Prostate gland (tissue), 2 donors: ENCODE measurements at regions of chr3 and their contacts with region 1.

Region 1: GRCh38 chr3:156674046-156674910 is at the start of gene TIPARP:
- DNase-seq: peak; percentile 99
- H3K4me3 ChIP-seq: peak within 1 kb of the TSS; percentile 88 to 94
- H3K27ac ChIP-seq: peak within 1 kb of the TSS; percentile 96 to 98
- H3K4me1 ChIP-seq: peaks cover 3% of the 10 kb centered on the region
- H3K27me3 ChIP-seq: no peaks in the 10 kb centered on the region
- CTCF ChIP-seq: peak; percentile 55 to 92 (median 89)
- POLR2A ChIP-seq: peak; percentile 100
- total RNA-seq, gene TIPARP: 31.9 to 52.0 TPM

Region 2: GRCh38 chr3:156535162-156535627 is 139.1 kb before region 1 on chr3:
- intact Hi-C with region 1: loop called (anchors 5 kb)
- DNase-seq: no peak
- H3K4me3 ChIP-seq: no peak overlapping the region
- H3K27ac ChIP-seq: peak overlapping the region; percentile 1 to 15
- H3K4me1 ChIP-seq: no peaks in the 10 kb centered on the region
- H3K27me3 ChIP-seq: no peaks in the 10 kb centered on the region
- CTCF ChIP-seq: peak in 1 of 4 experiments; percentile 24
- POLR2A ChIP-seq: no peak

Region 3: DNA sequence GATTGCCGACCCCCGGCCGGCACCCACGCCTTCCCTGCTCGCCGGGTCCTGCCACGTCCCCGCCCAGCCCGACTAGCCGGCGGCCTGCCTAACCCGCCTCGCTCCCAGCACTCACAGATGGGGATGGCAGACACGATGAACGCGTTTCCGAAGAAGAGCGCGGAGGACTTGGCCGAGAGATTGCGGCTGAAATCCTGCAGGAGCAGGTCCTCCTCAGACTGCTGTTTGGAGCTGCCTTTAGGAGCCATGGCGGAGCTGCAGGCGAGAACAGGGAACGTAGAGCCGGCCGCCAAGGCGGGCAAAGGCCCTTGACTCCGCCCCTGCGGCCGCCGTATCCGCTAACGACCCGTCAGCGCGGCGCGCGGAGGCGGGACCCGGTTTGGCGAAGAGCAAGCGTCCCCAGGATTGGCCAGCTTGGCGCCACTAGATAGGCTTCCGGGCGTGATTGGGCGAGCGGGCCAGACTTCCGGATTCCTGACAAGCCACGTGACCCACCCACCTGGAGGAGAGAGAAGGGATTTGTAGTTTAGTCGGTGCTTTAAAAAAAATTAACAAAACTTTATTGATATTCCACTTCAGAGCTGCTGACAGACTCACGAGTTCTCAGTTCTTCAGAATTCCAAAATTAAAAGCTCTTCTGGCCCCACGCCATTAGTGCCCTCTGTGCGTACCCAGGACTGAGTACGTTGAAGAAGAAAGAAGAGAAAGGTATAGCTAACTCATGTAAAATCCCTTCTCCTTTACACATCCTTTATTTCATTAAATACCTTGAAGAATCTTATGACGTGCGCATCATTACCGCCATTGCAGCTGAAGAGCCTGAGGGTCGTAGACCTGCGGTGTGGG is 119.2 kb before region 1 on chr3 and contains the start of gene SSR3:
- intact Hi-C with region 1: loop called (anchors 1 kb)
- DNase-seq: peak; percentile 99
- H3K4me3 ChIP-seq: peak within 1 kb of the TSS; percentile 60 to 87
- H3K27ac ChIP-seq: peak within 1 kb of the TSS; percentile 78 to 79
- H3K4me1 ChIP-seq: no peaks in the 10 kb centered on the region
- H3K27me3 ChIP-seq: no peaks in the 10 kb centered on the region
- CTCF ChIP-seq: peak in 2 of 4 experiments; percentile 65 to 85
- POLR2A ChIP-seq: peak; percentile 83
- total RNA-seq, gene SSR3: 102 to 142 TPM

Region 4: DNA sequence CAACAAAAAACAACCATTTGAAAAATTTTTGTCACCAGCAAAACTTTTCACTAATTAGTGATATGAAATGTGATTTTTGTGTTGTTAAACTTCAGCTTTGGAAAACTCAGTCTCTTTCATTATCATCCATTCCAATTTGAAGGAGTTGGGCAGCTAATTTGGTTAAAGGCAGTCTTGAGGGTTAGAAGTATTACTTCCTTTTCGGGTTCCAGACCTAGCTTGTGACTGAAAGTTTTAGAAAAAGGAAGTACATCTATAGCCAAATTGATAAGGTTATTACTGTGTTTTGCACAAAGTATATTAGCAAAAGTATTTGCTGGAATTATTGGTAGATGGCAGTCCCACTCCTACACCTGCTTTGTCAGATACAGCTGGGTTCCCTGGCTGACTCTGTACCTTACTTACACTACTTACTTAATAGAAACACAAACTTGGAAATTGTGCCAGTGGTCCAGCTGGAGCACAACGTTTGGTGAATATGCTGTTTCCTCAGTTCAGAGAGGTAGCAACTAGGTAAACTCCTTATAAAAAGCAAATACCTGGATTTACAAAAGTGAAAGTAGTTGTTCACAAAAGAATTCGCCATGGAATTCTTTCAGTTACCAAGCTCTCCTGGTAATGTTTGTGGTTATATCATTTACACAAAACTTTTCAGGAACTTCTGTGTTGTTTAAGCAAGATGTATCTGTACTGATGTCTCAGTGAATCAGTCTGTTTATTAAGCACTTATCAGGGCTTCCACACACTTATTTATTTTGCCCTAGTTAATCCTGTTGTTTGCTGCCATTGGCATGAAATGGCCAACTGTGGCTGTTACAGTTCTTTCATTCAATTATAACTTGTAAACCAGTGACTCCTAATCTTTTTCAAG is 31.7 kb after region 1 on chr3:
- intact Hi-C with region 1: no loop called
- DNase-seq: no peak
- H3K4me3 ChIP-seq: no peak overlapping the region
- H3K27ac ChIP-seq: no peak overlapping the region
- H3K4me1 ChIP-seq: no peaks in the 10 kb centered on the region
- H3K27me3 ChIP-seq: no peaks in the 10 kb centered on the region
- CTCF ChIP-seq: no peak
- POLR2A ChIP-seq: no peak

Region 5: GRCh38 chr3:156816800-156817645 is 142.7 kb after region 1 on chr3:
- intact Hi-C with region 1: loop called (anchors 2 kb)
- DNase-seq: peak; percentile 78
- H3K4me3 ChIP-seq: peak overlapping the region; percentile 51 to 57
- H3K27ac ChIP-seq: peak overlapping the region; percentile 79 to 80
- H3K4me1 ChIP-seq: peaks cover 3% of the 10 kb centered on the region
- H3K27me3 ChIP-seq: no peaks in the 10 kb centered on the region
- CTCF ChIP-seq: peak in 1 of 4 experiments; percentile 25
- POLR2A ChIP-seq: no peak

Region 6: GRCh38 chr3:157088601-157089454 is 414.6 kb after region 1 on chr3:
- intact Hi-C with region 1: loop called (anchors 2 kb)
- DNase-seq: peak; percentile 95
- H3K4me3 ChIP-seq: peak overlapping the region; percentile 40 to 59
- H3K27ac ChIP-seq: peak overlapping the region; percentile 99
- H3K4me1 ChIP-seq: peaks cover 26% of the 10 kb centered on the region
- H3K27me3 ChIP-seq: no peaks in the 10 kb centered on the region
- CTCF ChIP-seq: peak in 3 of 4 experiments; percentile 20 to 42 (median 23)
- POLR2A ChIP-seq: peak; percentile 69

Region 7: GRCh38 chr3:157136647-157137387 is 462.5 kb after region 1 on chr3:
- intact Hi-C with region 1: loop called (anchors 2 kb)
- DNase-seq: peak; percentile 46
- H3K4me3 ChIP-seq: no peak overlapping the region
- H3K27ac ChIP-seq: peak overlapping the region; percentile 77 to 94
- H3K4me1 ChIP-seq: peaks cover 33% of the 10 kb centered on the region
- H3K27me3 ChIP-seq: no peaks in the 10 kb centered on the region
- CTCF ChIP-seq: no peak
- POLR2A ChIP-seq: no peak